ENCODE measurements at regions of chr1 and their contacts with region 1.

Region 1: GRCh38 chr1:1574721-1575537 is at the start of gene SSU72:
- DNase-seq: peak; percentile 81 to 94
- H3K4me3 ChIP-seq: peak within 1 kb of the TSS; percentile 100
- H3K4me1 ChIP-seq: peaks cover 6% of the 10 kb centered on the region
- H3K27me3 ChIP-seq: no peaks in the 10 kb centered on the region

Region 2: DNA sequence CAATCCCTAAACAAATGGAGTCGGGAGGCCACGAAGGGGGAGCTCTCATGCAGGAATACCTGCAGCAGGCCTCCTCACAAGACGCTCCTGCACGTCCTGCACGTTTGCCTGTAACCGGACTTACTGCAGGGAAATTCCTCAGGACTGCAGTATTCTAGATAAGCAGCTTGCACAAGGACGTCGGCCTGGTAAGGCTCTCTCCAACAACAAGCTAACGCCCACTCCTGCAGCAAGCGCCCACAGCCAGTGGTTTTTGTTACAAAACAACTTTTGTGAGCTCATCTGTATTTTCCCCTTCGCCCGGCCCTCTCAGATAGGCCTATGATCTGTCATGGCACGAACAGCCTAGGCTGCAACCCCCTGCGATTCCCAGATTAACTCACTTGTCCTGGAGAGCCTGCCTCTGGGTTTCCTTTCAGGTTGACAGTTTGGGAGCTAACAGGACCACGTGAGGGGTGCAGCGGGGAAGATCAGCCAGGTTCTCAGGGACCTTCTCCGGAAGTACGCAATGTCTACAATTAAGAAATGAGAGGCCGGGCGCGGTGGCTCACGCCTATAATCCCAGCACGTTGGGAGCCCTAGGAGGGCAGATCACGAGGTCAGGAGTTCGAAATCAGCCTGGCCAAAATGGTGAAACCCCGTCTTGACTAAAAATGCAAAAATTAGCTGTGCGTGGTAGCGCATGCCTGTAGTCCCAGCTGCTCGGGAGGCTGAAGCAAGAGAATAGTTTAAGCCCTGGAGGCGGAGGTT is 39.5 kb after region 1 on chr1:
- in situ Hi-C with region 1: loop called (anchors 5 kb)
- DNase-seq: peak; percentile 22 to 69
- H3K4me3 ChIP-seq: peak overlapping the region; percentile 99
- H3K4me1 ChIP-seq: peaks cover 9% of the 10 kb centered on the region
- H3K27me3 ChIP-seq: no peaks in the 10 kb centered on the region